Breast epithelium (tissue), 4 donors: ENCODE measurements at regions of chr9 and their contacts with region 1.

Region 1: DNA sequence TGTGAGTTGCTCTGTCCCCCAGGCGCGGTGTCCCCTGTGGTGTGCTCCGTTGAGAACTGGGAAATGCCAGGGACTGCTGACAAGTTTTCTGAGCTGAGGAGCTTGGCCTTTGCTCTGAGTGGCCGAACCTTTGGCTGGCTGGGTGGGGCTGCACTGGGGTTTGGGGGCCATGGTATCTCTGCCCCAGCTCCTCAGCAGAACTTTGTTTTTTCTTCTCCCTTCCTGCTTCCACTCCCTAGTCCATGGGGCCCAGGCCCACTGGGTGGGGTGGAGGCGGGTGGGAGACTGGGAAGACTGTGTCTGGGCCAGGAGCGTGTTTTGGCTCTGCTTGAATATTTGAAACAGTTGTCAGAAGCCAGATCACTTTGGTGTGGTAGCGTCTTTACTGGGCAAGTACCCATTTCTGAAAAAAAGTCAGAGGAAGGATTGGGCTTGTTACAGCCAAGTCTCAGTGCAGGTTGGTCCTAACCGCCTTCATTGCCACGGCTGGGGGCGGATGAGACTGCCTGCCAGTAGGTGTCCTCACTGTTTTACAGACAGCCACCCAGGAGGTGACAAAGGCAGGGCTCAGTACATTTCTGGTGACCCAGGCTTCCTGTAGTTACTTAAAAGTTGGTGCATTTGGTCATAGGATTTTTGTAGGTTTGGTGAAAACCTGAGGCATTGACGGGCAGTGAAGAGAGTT is 92.7 kb downstream of the DAB2IP start:
- DNase-seq: peak; percentile 79 to 85
- H3K4me3 ChIP-seq: peak overlapping the region; percentile 44 to 64 (median 52)
- H3K27ac ChIP-seq: peak overlapping the region; percentile 88 to 92
- H3K4me1 ChIP-seq: peaks cover 12 to 46% of the 10 kb centered on the region in 2 donors
- H3K27me3 ChIP-seq: no peaks in the 10 kb centered on the region
- CTCF ChIP-seq: peak; percentile 26 to 54 (median 29)
- POLR2A ChIP-seq: no peak

Region 2: GRCh38 chr9:121700163-121700831 is 43.8 kb before region 1 on chr9:
- intact Hi-C with region 1: loop called (anchors 5 kb)
- DNase-seq: peak; percentile 86 to 96
- H3K4me3 ChIP-seq: peak overlapping the region; percentile 60 to 96 (median 74)
- H3K27ac ChIP-seq: peak overlapping the region; percentile 92 to 95
- H3K4me1 ChIP-seq: peaks cover 5 to 7% of the 10 kb centered on the region in 2 donors
- H3K27me3 ChIP-seq: no peaks in the 10 kb centered on the region
- CTCF ChIP-seq: peak; percentile 44 to 83 (median 47)
- POLR2A ChIP-seq: no peak